ENCODE measurements at regions of chr5 and their contacts with region 1.

Region 1: GRCh38 chr5:102223542-102224477 is 72.3 kb downstream of the SLCO4C1 start:
- DNase-seq: peak in 3 of 14 experiments; percentile 45 to 54 (median 53)
- ATAC-seq: no peak
- H3K4me3 ChIP-seq: no peak overlapping the region
- H3K4me3 Mint-ChIP-seq: no peak overlapping the region
- H3K27ac ChIP-seq: no peak overlapping the region
- H3K27ac Mint-ChIP-seq: no peak overlapping the region
- H3K4me1 ChIP-seq: no peaks in the 10 kb centered on the region
- H3K4me1 Mint-ChIP-seq: no peaks in the 10 kb centered on the region
- H3K27me3 ChIP-seq: no peaks in the 10 kb centered on the region
- H3K27me3 Mint-ChIP-seq: peaks cover 11% of the 10 kb centered on the region
- CTCF ChIP-seq: peak; percentile 76

Region 2: GRCh38 chr5:100430268-100431195 is 1793.3 kb before region 1 on chr5:
- CTCF ChIA-PET with region 1: no interaction called
- POLR2A ChIA-PET with region 1: no interaction called
- intact Hi-C with region 1: loop called in 1 of 2 experiments (anchors 5 kb)
- DNase-seq: peak in 13 of 14 experiments; percentile 9 to 55 (median 25)
- ATAC-seq: no peak
- H3K4me3 ChIP-seq: no peak overlapping the region
- H3K4me3 Mint-ChIP-seq: no peak overlapping the region
- H3K27ac ChIP-seq: no peak overlapping the region
- H3K27ac Mint-ChIP-seq: no peak overlapping the region
- H3K4me1 ChIP-seq: no peaks in the 10 kb centered on the region
- H3K4me1 Mint-ChIP-seq: no peaks in the 10 kb centered on the region
- H3K27me3 ChIP-seq: no peaks in the 10 kb centered on the region
- H3K27me3 Mint-ChIP-seq: peaks cover 7% of the 10 kb centered on the region
- CTCF ChIP-seq: peak; percentile 86

Region 3: DNA sequence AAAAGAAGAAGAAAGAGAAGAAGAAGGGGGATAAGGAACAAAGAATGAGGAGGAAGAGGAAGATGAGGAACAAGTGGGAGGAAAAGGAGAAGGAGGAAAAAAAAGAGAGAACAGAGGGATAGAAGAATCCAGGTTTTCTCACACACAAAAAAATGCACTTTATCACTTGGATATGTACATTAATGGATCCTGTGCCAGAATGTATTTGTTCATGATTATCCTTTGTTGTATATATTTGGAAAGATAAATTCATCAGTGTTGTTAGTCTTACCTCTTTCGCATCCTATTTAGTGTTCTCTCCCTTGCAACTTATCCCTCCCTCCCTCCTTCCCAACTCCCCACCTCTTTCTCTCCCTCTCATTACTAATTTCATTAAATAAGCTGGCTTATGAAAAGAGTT is 226.6 kb before region 1 on chr5:
- CTCF ChIA-PET with region 1: no interaction called
- POLR2A ChIA-PET with region 1: no interaction called
- intact Hi-C with region 1: no loop called
- DNase-seq: no peak
- ATAC-seq: no peak
- H3K4me3 ChIP-seq: no peak overlapping the region
- H3K4me3 Mint-ChIP-seq: no peak overlapping the region
- H3K27ac ChIP-seq: no peak overlapping the region
- H3K27ac Mint-ChIP-seq: no peak overlapping the region
- H3K4me1 ChIP-seq: no peaks in the 10 kb centered on the region
- H3K4me1 Mint-ChIP-seq: no peaks in the 10 kb centered on the region
- H3K27me3 ChIP-seq: no peaks in the 10 kb centered on the region
- H3K27me3 Mint-ChIP-seq: no peaks in the 10 kb centered on the region
- CTCF ChIP-seq: no peak

Measured in CD4-positive, alpha-beta T cell (primary cell).